ENCODE measurements at regions of chr5 and their contacts with region 1.

Region 1: GRCh38 chr5:141524604-141525597 is 36.0 kb downstream of the PCDHGC5 start:
- DNase-seq: peak; percentile 97
- ATAC-seq: peak; percentile 71
- H3K4me3 ChIP-seq: no peak overlapping the region
- H3K27ac ChIP-seq: peak overlapping the region; percentile 83
- H3K4me1 ChIP-seq: peaks cover 37% of the 10 kb centered on the region
- H3K27me3 ChIP-seq: no peaks in the 10 kb centered on the region
- CTCF ChIP-seq: peak; percentile 99; the same call in 1 of the 2 replicates
- POLR2A ChIP-seq: peak; percentile 52; the same call in 1 of the 2 replicates
- RAD21 ChIP-seq: peak; percentile 95

Region 2: GRCh38 chr5:141349917-141350619 is 174.8 kb before region 1 on chr5 and contains the start of gene PCDHGB1:
- CTCF ChIA-PET with region 1: no interaction called
- POLR2A ChIA-PET with region 1: no interaction called
- dilution Hi-C with region 1: no loop called
- in situ Hi-C with region 1: no loop called
- intact Hi-C with region 1: no loop called
- DNase-seq: peak; percentile 71
- ATAC-seq: peak; percentile 94
- H3K4me3 ChIP-seq: peak within 1 kb of the TSS; percentile 55
- H3K27ac ChIP-seq: no peak within 1 kb of the TSS
- H3K4me1 ChIP-seq: no peaks in the 10 kb centered on the region
- H3K27me3 ChIP-seq: no peaks in the 10 kb centered on the region
- CTCF ChIP-seq: peak; percentile 61
- POLR2A ChIP-seq: no peak
- RAD21 ChIP-seq: peak; percentile 57
- total RNA-seq, gene PCDHGB1: 3.3 and 3.6 TPM in 2 replicates

Region 3: DNA sequence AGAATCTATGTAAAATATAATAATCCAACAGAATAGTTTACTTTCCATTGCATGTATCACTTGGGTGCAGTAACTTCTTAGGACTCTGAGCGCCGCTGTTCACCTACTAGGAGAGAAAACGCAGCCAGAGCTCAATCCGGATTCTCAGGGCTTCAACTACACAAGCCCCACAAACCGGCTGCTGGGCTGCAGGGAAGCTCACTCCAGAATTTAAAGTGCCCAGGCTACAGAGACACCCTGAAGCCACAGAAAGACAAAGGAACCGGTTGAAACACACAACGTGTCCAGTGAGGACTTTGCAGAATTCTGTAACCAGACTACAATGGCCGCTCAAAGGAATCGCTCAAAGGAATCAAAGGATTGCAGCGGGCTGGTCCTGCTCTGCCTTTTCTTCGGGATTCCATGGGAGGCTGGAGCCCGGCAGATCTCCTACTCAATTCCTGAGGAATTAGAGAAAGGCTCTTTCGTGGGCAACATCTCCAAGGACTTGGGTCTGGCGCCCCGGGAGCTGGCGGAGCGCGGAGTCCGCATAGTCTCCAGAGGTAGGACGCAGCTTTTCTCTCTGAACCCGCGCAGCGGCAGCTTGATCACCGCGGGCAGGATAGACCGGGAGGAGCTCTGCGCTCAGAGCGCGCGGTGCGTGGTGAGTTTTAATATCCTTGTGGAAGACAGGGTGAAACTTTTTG is 111.9 kb before region 1 on chr5 and contains the start of gene PCDHGA10:
- CTCF ChIA-PET with region 1: interaction called, 10 read pairs
- POLR2A ChIA-PET with region 1: no interaction called
- dilution Hi-C with region 1: no loop called
- in situ Hi-C with region 1: no loop called
- intact Hi-C with region 1: loop called (anchors 1 kb)
- DNase-seq: peak; percentile 80
- ATAC-seq: peak; percentile 77
- H3K4me3 ChIP-seq: peak within 1 kb of the TSS; percentile 55
- H3K27ac ChIP-seq: peak within 1 kb of the TSS; percentile 65; the same call in 1 of the 2 replicates
- H3K4me1 ChIP-seq: no peaks in the 10 kb centered on the region
- H3K27me3 ChIP-seq: no peaks in the 10 kb centered on the region
- CTCF ChIP-seq: peak; percentile 70
- POLR2A ChIP-seq: no peak
- RAD21 ChIP-seq: peak; percentile 61
- total RNA-seq, gene PCDHGA10: 6.6 and 6.9 TPM in 2 replicates

Region 4: DNA sequence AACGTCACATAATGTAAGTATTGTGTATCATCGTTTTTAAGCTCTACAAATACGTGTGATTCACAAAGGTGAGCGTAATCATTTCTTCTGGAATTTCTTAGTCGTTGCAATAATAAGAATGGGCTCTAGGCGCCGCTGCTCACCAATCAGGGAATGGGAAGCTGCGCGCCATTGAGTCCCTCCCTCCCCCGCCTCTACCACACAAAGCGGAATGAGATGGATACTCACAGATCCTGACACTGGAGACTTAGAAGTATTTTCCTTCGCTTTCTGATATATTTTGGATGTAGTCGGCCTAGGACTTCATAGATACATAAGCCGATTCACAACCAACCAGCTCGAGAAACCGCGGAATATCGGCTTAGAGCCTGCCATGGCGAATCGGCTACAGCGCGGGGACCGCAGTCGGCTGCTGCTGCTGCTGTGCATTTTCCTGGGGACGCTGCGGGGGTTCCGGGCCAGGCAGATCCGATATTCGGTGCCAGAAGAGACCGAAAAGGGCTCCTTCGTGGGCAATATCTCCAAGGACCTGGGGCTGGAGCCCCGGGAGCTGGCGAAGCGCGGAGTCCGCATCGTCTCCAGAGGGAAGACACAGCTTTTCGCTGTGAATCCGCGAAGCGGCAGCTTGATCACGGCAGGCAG is 103.9 kb before region 1 on chr5 and contains the start of gene PCDHGA11:
- CTCF ChIA-PET with region 1: interaction called, 19 read pairs
- POLR2A ChIA-PET with region 1: no interaction called
- dilution Hi-C with region 1: no loop called
- in situ Hi-C with region 1: no loop called
- intact Hi-C with region 1: loop called (anchors 1 kb)
- DNase-seq: peak; percentile 63
- ATAC-seq: peak; percentile 57
- H3K4me3 ChIP-seq: peak within 1 kb of the TSS; percentile 54
- H3K27ac ChIP-seq: peak within 1 kb of the TSS; percentile 26; the same call in 1 of the 2 replicates
- H3K4me1 ChIP-seq: no peaks in the 10 kb centered on the region
- H3K27me3 ChIP-seq: no peaks in the 10 kb centered on the region
- CTCF ChIP-seq: peak; percentile 64
- POLR2A ChIP-seq: no peak
- RAD21 ChIP-seq: peak; percentile 70
- total RNA-seq, gene PCDHGA11: 5.4 and 5.8 TPM in 2 replicates

Region 5: GRCh38 chr5:141430332-141431113 is 94.4 kb before region 1 on chr5 and contains the start of gene PCDHGA12:
- CTCF ChIA-PET with region 1: interaction called, 5 read pairs
- POLR2A ChIA-PET with region 1: no interaction called
- dilution Hi-C with region 1: no loop called
- in situ Hi-C with region 1: no loop called
- intact Hi-C with region 1: loop called (anchors 2 kb)
- DNase-seq: peak; percentile 87
- ATAC-seq: peak; percentile 85
- H3K4me3 ChIP-seq: peak within 1 kb of the TSS; percentile 23
- H3K27ac ChIP-seq: peak within 1 kb of the TSS; percentile 68
- H3K4me1 ChIP-seq: no peaks in the 10 kb centered on the region; the same call in 1 of the 2 replicates
- H3K27me3 ChIP-seq: no peaks in the 10 kb centered on the region
- CTCF ChIP-seq: peak; percentile 71
- POLR2A ChIP-seq: no peak
- RAD21 ChIP-seq: peak; percentile 75
- total RNA-seq, gene PCDHGA12: 8.8 and 9.7 TPM in 2 replicates

Region 6: DNA sequence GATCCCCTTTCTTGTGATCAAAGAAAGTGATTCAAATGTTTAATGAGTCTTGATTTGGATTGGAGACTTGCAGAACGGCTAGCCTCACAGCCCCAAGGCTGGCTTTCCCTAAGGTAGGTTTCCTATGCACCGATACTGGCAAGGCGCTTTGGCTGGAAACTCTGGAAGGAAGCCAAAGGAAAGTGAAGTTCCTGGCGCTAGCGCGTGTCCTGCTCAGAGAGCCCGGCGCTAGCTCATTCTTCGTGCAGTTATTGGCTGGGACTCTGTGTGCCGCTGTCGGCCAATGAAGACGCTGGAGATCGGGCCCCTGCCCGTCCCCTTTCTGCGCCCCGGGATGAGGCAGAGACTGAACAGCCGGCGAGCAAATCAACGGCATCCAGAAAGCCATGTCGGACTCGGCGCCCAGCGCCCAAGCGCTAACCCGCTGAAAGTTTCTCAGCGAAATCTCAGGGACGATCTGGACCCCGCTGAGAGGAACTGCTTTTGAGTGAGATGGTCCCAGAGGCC is 49.2 kb before region 1 on chr5 and contains the start of gene PCDHGC3:
- CTCF ChIA-PET with region 1: interaction called, 19 read pairs
- POLR2A ChIA-PET with region 1: no interaction called
- dilution Hi-C with region 1: no loop called
- in situ Hi-C with region 1: loop called (anchors 5 kb)
- intact Hi-C with region 1: loop called (anchors 1 kb)
- DNase-seq: peak; percentile 95
- ATAC-seq: peak; percentile 97
- H3K4me3 ChIP-seq: peak within 1 kb of the TSS; percentile 54
- H3K27ac ChIP-seq: peak within 1 kb of the TSS; percentile 66
- H3K4me1 ChIP-seq: peaks cover 17% of the 10 kb centered on the region
- H3K27me3 ChIP-seq: no peaks in the 10 kb centered on the region
- CTCF ChIP-seq: peak; percentile 58
- POLR2A ChIP-seq: peak; percentile 57; the same call in 1 of the 2 replicates
- RAD21 ChIP-seq: peak; percentile 61
- total RNA-seq, gene PCDHGC3: 21.1 and 21.9 TPM in 2 replicates

Region 7: DNA sequence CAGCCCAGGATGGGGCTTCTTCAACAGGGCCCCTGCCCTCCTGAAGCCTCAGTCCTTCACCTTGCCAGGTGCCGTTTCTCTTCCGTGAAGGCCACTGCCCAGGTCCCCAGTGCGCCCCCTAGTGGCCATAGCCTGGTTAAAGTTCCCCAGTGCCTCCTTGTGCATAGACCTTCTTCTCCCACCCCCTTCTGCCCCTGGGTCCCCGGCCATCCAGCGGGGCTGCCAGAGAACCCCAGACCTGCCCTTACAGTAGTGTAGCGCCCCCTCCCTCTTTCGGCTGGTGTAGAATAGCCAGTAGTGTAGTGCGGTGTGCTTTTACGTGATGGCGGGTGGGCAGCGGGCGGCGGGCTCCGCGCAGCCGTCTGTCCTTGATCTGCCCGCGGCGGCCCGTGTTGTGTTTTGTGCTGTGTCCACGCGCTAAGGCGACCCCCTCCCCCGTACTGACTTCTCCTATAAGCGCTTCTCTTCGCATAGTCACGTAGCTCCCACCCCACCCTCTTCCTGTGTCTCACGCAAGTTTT is 12.5 kb before region 1 on chr5:
- CTCF ChIA-PET with region 1: interaction called, 16 read pairs
- POLR2A ChIA-PET with region 1: no interaction called
- dilution Hi-C with region 1: no loop called
- in situ Hi-C with region 1: no loop called
- intact Hi-C with region 1: loop called (anchors 1 kb)
- DNase-seq: peak; percentile 54
- ATAC-seq: no peak
- H3K4me3 ChIP-seq: no peak overlapping the region
- H3K27ac ChIP-seq: peak overlapping the region; percentile 84
- H3K4me1 ChIP-seq: peaks cover 57% of the 10 kb centered on the region
- H3K27me3 ChIP-seq: no peaks in the 10 kb centered on the region
- CTCF ChIP-seq: peak; percentile 62
- POLR2A ChIP-seq: no peak
- RAD21 ChIP-seq: peak; percentile 44

Measured in IMR-90 (cell line).